ENCODE measurements at regions of chr2 and their contacts with region 1.

Region 1: DNA sequence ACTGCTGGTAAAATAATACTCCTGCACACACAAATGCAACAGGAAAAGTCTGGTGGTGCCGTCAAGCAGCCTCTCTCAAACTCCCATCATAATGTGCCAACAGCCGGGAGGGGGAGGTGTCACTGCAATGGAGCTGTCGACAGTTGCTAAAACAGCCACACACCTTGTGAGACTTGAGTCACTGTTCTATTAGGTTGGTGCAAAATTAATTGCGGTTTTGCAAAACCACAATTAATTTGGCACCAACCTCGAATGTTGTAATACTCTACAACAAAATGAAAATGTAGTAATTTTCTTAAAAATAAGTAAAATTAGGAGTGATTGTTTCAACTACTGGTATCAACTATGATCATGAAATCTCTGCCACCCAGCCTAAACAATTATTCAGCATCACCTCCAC is 32.2 kb downstream of the DDX18 start:
- DNase-seq: no peak
- H3K4me3 ChIP-seq: no peak overlapping the region
- H3K27ac ChIP-seq: no peak overlapping the region
- H3K4me1 ChIP-seq: no peaks in the 10 kb centered on the region
- H3K27me3 ChIP-seq: peaks cover 0 to 22% of the 10 kb centered on the region in 2 donors
- CTCF ChIP-seq: no peak
- POLR2A ChIP-seq: no peak

Region 2: GRCh38 chr2:117875786-117876185 is 29.0 kb after region 1 on chr2:
- intact Hi-C with region 1: loop called (anchors 2 kb)
- DNase-seq: no peak
- H3K4me3 ChIP-seq: no peak overlapping the region
- H3K27ac ChIP-seq: no peak overlapping the region
- H3K4me1 ChIP-seq: no peaks in the 10 kb centered on the region
- H3K27me3 ChIP-seq: no peaks in the 10 kb centered on the region
- CTCF ChIP-seq: no peak
- POLR2A ChIP-seq: no peak

Measured in breast epithelium (tissue), 4 donors.